Activated B cell treated with CpG ODN at 0.5 μM for 24 hours (primary cell): ENCODE measurements at regions of chr9 and their contacts with region 1.

Region 1: GRCh38 chr9:68779558-68780384 is 74.7 kb downstream of the PIP5K1B start:
- DNase-seq: peak; percentile 93
- ATAC-seq: peak; percentile 93
- H3K4me3 Mint-ChIP-seq: no peak overlapping the region
- H3K27ac Mint-ChIP-seq: no peak overlapping the region
- H3K4me1 Mint-ChIP-seq: peaks cover 6% of the 10 kb centered on the region
- H3K27me3 Mint-ChIP-seq: no peaks in the 10 kb centered on the region
- CTCF ChIP-seq: no peak

Region 2: DNA sequence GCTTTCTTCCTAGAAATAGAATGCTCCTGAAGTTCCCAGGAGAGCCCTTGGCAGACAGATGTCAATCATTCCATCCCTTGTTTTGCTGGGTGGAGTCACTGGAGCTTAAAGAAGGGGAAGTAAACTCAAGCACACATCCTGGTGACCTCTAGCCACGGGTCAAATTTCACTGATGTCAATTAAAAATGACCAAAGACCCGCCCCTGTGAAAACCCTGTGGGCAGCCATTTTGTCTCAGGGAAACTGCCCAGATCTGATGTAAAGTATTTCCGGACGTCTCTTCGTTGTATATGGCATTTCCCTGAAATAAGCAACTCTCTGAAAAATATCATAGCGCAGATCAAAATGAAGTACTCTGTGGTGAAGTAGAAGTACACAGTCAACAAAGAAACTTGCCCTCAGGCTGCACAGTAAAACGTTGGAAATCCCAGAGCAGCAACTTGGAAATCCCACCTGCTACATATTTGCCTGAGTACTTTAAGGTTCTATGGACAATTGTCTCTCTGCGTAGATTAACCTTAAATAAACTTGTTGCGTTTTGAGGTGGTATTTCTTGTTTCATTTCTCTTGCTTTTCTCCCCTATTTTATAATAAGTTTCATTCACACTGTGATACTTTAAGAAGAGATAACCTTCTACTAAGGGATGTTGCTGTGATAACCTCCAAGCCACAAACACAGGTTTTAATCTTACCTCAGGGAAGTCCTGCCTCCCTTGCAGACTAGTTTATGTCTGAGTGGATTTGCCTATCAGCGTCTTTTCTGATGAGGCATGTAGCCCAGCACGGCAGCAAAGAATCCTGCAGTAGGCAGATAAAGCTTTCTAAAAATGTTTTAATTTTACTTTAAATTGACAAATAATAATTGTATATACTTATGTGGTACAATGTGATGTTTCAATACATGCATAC is 135.6 kb before region 1 on chr9:
- CTCF ChIA-PET with region 1: interaction called, 4 read pairs
- POLR2A ChIA-PET with region 1: interaction called, 6 read pairs
- intact Hi-C with region 1: loop called (anchors 1 kb)
- DNase-seq: peak; percentile 31
- ATAC-seq: peak; percentile 63
- H3K4me3 Mint-ChIP-seq: peak overlapping the region; percentile 73
- H3K27ac Mint-ChIP-seq: peak overlapping the region; percentile 94
- H3K4me1 Mint-ChIP-seq: peaks cover 93% of the 10 kb centered on the region
- H3K27me3 Mint-ChIP-seq: no peaks in the 10 kb centered on the region
- CTCF ChIP-seq: no peak

Region 3: GRCh38 chr9:68704814-68705530 is 74.8 kb before region 1 on chr9 and contains the start of gene PIP5K1B:
- CTCF ChIA-PET with region 1: interaction called, 5 read pairs
- POLR2A ChIA-PET with region 1: interaction called, 31 read pairs
- intact Hi-C with region 1: loop called (anchors 1 kb)
- DNase-seq: peak; percentile 76
- ATAC-seq: peak; percentile 85
- H3K4me3 Mint-ChIP-seq: peak within 1 kb of the TSS; percentile 97
- H3K27ac Mint-ChIP-seq: peak within 1 kb of the TSS; percentile 82
- H3K4me1 Mint-ChIP-seq: peaks cover 50% of the 10 kb centered on the region
- H3K27me3 Mint-ChIP-seq: no peaks in the 10 kb centered on the region
- CTCF ChIP-seq: no peak
- total RNA-seq, gene PIP5K1B: 17.1 and 22.0 TPM in 2 replicates

Region 4: GRCh38 chr9:68749568-68750279 is 30.0 kb before region 1 on chr9:
- CTCF ChIA-PET with region 1: no interaction called
- POLR2A ChIA-PET with region 1: no interaction called
- intact Hi-C with region 1: no loop called
- DNase-seq: no peak
- ATAC-seq: no peak
- H3K4me3 Mint-ChIP-seq: no peak overlapping the region
- H3K27ac Mint-ChIP-seq: no peak overlapping the region
- H3K4me1 Mint-ChIP-seq: peaks cover 12% of the 10 kb centered on the region
- H3K27me3 Mint-ChIP-seq: no peaks in the 10 kb centered on the region
- CTCF ChIP-seq: no peak

Region 5: GRCh38 chr9:68759981-68760673 is 19.6 kb before region 1 on chr9:
- CTCF ChIA-PET with region 1: interaction called, 3 read pairs
- POLR2A ChIA-PET with region 1: no interaction called
- intact Hi-C with region 1: loop called (anchors 2 kb)
- DNase-seq: no peak
- ATAC-seq: no peak
- H3K4me3 Mint-ChIP-seq: no peak overlapping the region
- H3K27ac Mint-ChIP-seq: no peak overlapping the region
- H3K4me1 Mint-ChIP-seq: peaks cover 21% of the 10 kb centered on the region
- H3K27me3 Mint-ChIP-seq: no peaks in the 10 kb centered on the region
- CTCF ChIP-seq: no peak

Region 6: GRCh38 chr9:68793605-68794343 is 14.0 kb after region 1 on chr9:
- CTCF ChIA-PET with region 1: interaction called, 7 read pairs
- POLR2A ChIA-PET with region 1: interaction called, 5 read pairs
- intact Hi-C with region 1: loop called (anchors 2 kb)
- DNase-seq: no peak
- ATAC-seq: peak; percentile 84
- H3K4me3 Mint-ChIP-seq: no peak overlapping the region
- H3K27ac Mint-ChIP-seq: no peak overlapping the region
- H3K4me1 Mint-ChIP-seq: peaks cover 25% of the 10 kb centered on the region
- H3K27me3 Mint-ChIP-seq: no peaks in the 10 kb centered on the region
- CTCF ChIP-seq: no peak

Region 7: DNA sequence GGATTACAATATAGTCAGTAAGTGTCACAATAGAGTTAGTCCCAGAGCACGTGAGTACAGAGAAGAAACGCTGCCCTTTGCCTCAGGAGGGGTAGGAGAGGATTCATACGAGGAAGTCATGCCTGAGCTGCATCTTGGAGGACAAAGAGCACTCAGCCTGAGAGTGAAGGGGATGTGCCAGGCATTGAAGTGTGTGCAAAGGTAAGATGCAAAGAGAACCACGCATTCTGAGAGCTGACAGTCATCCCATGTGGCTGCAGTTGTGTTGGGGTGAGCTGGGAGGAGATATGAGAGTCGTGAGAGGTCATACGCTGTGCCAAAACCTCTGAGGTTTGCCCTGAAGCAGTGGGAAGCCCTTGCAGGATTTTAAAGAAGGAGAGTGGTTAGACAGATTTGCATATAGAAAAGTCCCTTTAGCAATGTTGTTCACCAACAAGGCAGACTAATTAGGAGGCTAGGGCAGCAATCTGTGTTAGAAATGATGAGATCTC is 22.8 kb after region 1 on chr9:
- CTCF ChIA-PET with region 1: no interaction called
- POLR2A ChIA-PET with region 1: interaction called, 15 read pairs
- intact Hi-C with region 1: no loop called
- DNase-seq: peak; percentile 26
- ATAC-seq: peak; percentile 93
- H3K4me3 Mint-ChIP-seq: no peak overlapping the region
- H3K27ac Mint-ChIP-seq: no peak overlapping the region
- H3K4me1 Mint-ChIP-seq: peaks cover 42% of the 10 kb centered on the region
- H3K27me3 Mint-ChIP-seq: no peaks in the 10 kb centered on the region
- CTCF ChIP-seq: no peak

Region 8: GRCh38 chr9:68949271-68950000 is 169.7 kb after region 1 on chr9:
- CTCF ChIA-PET with region 1: no interaction called
- POLR2A ChIA-PET with region 1: no interaction called
- intact Hi-C with region 1: no loop called
- DNase-seq: no peak
- ATAC-seq: no peak
- H3K4me3 Mint-ChIP-seq: no peak overlapping the region
- H3K27ac Mint-ChIP-seq: peak overlapping the region; percentile 4
- H3K4me1 Mint-ChIP-seq: peaks cover 28% of the 10 kb centered on the region
- H3K27me3 Mint-ChIP-seq: no peaks in the 10 kb centered on the region
- CTCF ChIP-seq: no peak

Region 9: DNA sequence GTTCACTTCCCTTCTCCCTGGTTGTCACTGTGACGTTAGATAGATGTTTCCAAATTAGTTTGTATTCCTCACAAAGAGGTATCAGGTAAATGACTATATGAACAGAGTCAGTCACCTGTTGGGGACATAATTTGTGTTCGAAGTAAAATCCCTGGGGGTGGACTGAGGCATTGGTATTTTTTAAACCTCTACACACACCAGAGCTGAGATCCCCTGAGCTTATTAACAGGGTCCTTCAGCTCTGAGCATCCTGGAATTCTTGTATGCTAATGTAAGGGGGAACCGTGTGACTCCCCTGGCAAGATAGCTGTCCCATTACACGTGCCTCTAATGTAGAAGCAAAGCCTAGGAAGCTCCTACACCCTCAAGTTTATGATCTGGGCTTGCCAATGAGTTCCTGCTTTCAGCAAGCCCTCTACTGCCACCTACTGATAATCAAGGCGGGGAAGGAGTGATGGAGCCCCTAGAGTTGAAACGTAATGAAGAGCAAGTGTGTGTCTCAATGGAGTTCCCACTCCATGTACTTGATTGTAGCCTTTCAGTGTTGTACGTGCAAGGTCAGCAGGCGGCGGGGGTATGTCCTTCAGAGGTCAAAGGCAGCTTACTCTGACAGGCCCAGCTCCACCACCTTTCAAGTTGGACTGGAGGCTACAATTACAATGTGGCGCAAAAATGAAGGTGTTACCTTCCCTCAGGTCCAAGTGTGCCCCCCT is 219.8 kb after region 1 on chr9:
- CTCF ChIA-PET with region 1: no interaction called
- POLR2A ChIA-PET with region 1: interaction called, 4 read pairs
- intact Hi-C with region 1: loop called (anchors 2 kb)
- DNase-seq: peak; percentile 24
- ATAC-seq: peak; percentile 95
- H3K4me3 Mint-ChIP-seq: no peak overlapping the region
- H3K27ac Mint-ChIP-seq: no peak overlapping the region
- H3K4me1 Mint-ChIP-seq: peaks cover 20% of the 10 kb centered on the region
- H3K27me3 Mint-ChIP-seq: no peaks in the 10 kb centered on the region
- CTCF ChIP-seq: peak; percentile 26

Region 10: GRCh38 chr9:69535911-69536310 is 756.1 kb after region 1 on chr9:
- CTCF ChIA-PET with region 1: no interaction called
- POLR2A ChIA-PET with region 1: no interaction called
- intact Hi-C with region 1: no loop called
- DNase-seq: no peak
- ATAC-seq: no peak
- H3K4me3 Mint-ChIP-seq: no peak overlapping the region
- H3K27ac Mint-ChIP-seq: no peak overlapping the region
- H3K4me1 Mint-ChIP-seq: no peaks in the 10 kb centered on the region
- H3K27me3 Mint-ChIP-seq: peaks cover 7% of the 10 kb centered on the region
- CTCF ChIP-seq: no peak